Caco-2 (cell line): ENCODE measurements at regions of chr15 and their contacts with region 1.

Region 1: GRCh38 chr15:65221697-65222096 is 10.4 kb upstream of the CILP start:
- DNase-seq: peak in 1 of 2 experiments; percentile 39
- H3K4me3 ChIP-seq: no peak overlapping the region
- H3K4me3 Mint-ChIP-seq: no peak overlapping the region
- H3K27ac Mint-ChIP-seq: peak overlapping the region; percentile 55
- H3K4me1 ChIP-seq: peaks cover 26% of the 10 kb centered on the region
- H3K4me1 Mint-ChIP-seq: peaks cover 14% of the 10 kb centered on the region
- H3K27me3 ChIP-seq: no peaks in the 10 kb centered on the region
- H3K27me3 Mint-ChIP-seq: no peaks in the 10 kb centered on the region
- CTCF ChIP-seq: no peak

Region 2: GRCh38 chr15:65275728-65276126 is 54.0 kb after region 1 on chr15:
- CTCF ChIA-PET with region 1: interaction called, 12 read pairs
- POLR2A ChIA-PET with region 1: no interaction called
- intact Hi-C with region 1: no loop called
- DNase-seq: peak; percentile 65 to 80
- H3K4me3 ChIP-seq: no peak overlapping the region
- H3K4me3 Mint-ChIP-seq: peak overlapping the region; percentile 3
- H3K27ac Mint-ChIP-seq: peak overlapping the region; percentile 88
- H3K4me1 ChIP-seq: peaks cover 48% of the 10 kb centered on the region
- H3K4me1 Mint-ChIP-seq: peaks cover 42% of the 10 kb centered on the region
- H3K27me3 ChIP-seq: no peaks in the 10 kb centered on the region
- H3K27me3 Mint-ChIP-seq: no peaks in the 10 kb centered on the region
- CTCF ChIP-seq: no peak

Region 3: GRCh38 chr15:65304389-65305144 is 82.9 kb after region 1 on chr15 and contains the start of gene RNU5B-1:
- CTCF ChIA-PET with region 1: interaction called, 11 read pairs
- POLR2A ChIA-PET with region 1: interaction called, 18 read pairs
- intact Hi-C with region 1: no loop called
- DNase-seq: peak; percentile 86 to 89
- H3K4me3 ChIP-seq: peak within 1 kb of the TSS; percentile 41
- H3K4me3 Mint-ChIP-seq: peak within 1 kb of the TSS; percentile 90
- H3K27ac Mint-ChIP-seq: peak within 1 kb of the TSS; percentile 95
- H3K4me1 ChIP-seq: peaks cover 6% of the 10 kb centered on the region; the same call in 1 of the 2 replicates
- H3K4me1 Mint-ChIP-seq: no peaks in the 10 kb centered on the region
- H3K27me3 ChIP-seq: no peaks in the 10 kb centered on the region
- H3K27me3 Mint-ChIP-seq: no peaks in the 10 kb centered on the region
- CTCF ChIP-seq: peak in 1 of 2 experiments; percentile 77
- total RNA-seq, gene RNU5B-1: not detected in 2 replicates